Activated CD4-positive, alpha-beta memory T cell treated with anti-CD3 and anti-CD28 coated beads for 36 hours (primary cell): ENCODE measurements at regions of chr10 and their contacts with region 1.

Region 1: GRCh38 chr10:122495406-122496340 is 34.3 kb downstream of the HTRA1 start:
- DNase-seq: peak; percentile 26
- H3K4me3 Mint-ChIP-seq: no peak overlapping the region
- H3K27ac Mint-ChIP-seq: no peak overlapping the region
- H3K4me1 Mint-ChIP-seq: peaks cover 34% of the 10 kb centered on the region
- H3K27me3 Mint-ChIP-seq: peaks cover under 1% of the 10 kb centered on the region

Region 2: DNA sequence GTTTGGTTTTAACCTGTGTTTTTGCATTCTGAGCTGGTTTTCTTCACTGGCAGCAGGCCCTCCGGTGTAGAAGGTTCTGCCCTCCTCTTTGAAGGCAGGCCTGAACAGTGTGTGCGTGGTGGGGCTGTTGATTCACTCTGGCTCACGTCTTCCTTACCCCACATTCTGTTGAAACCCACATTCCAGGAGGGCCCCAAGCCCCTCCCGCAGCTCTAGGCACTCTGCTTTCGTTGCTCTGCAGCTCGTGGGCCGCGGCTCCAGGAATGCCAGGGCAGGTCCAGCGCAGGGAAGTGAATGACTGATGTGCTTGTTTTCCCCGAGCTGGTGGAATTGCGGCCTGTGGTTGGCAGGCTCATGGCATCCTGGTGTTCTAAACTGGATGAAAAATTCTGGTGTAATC is 14.7 kb after region 1 on chr10:
- CTCF ChIA-PET with region 1: interaction called, 4 read pairs
- POLR2A ChIA-PET with region 1: interaction called, 4 read pairs
- intact Hi-C with region 1: loop called (anchors 2 kb)
- DNase-seq: no peak
- H3K4me3 Mint-ChIP-seq: no peak overlapping the region
- H3K27ac Mint-ChIP-seq: no peak overlapping the region
- H3K4me1 Mint-ChIP-seq: peaks cover 16% of the 10 kb centered on the region
- H3K27me3 Mint-ChIP-seq: no peaks in the 10 kb centered on the region

Region 3: GRCh38 chr10:122515588-122516231 is 20.0 kb after region 1 on chr10:
- CTCF ChIA-PET with region 1: no interaction called
- POLR2A ChIA-PET with region 1: interaction called, 4 read pairs
- intact Hi-C with region 1: loop called (anchors 2 kb)
- DNase-seq: peak; percentile 80
- H3K4me3 Mint-ChIP-seq: no peak overlapping the region
- H3K27ac Mint-ChIP-seq: no peak overlapping the region
- H3K4me1 Mint-ChIP-seq: peaks cover 34% of the 10 kb centered on the region
- H3K27me3 Mint-ChIP-seq: peaks cover 3% of the 10 kb centered on the region

Region 4: DNA sequence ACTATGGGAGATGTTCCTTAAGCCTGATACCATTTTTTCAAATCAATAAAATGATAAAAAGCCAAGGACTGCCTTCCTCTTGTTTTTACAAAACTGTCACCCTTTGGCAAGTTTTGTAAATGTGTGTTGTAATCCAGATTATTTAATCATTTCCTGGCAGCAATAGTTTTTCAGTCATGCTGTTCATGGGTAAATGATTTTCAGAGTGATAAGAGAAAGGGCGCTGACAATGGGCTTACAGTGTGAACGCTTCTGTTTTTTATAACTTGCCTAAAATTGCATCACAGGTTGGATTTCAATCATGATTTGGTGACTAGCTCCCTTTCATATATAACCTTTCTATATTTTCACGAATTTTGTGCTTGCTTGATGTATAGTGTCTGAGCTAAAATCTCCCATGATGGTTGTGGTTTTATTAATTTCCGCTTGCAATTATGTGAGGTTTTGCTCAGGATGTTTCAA is 45.9 kb after region 1 on chr10:
- CTCF ChIA-PET with region 1: interaction called, 3 read pairs
- POLR2A ChIA-PET with region 1: no interaction called
- intact Hi-C with region 1: loop called (anchors 5 kb)
- DNase-seq: no peak
- H3K4me3 Mint-ChIP-seq: no peak overlapping the region
- H3K27ac Mint-ChIP-seq: no peak overlapping the region
- H3K4me1 Mint-ChIP-seq: peaks cover 47% of the 10 kb centered on the region
- H3K27me3 Mint-ChIP-seq: no peaks in the 10 kb centered on the region

Region 5: GRCh38 chr10:122688293-122688994 is 192.8 kb after region 1 on chr10:
- CTCF ChIA-PET with region 1: no interaction called
- POLR2A ChIA-PET with region 1: no interaction called
- intact Hi-C with region 1: no loop called
- DNase-seq: no peak
- H3K4me3 Mint-ChIP-seq: no peak overlapping the region
- H3K27ac Mint-ChIP-seq: no peak overlapping the region
- H3K4me1 Mint-ChIP-seq: no peaks in the 10 kb centered on the region
- H3K27me3 Mint-ChIP-seq: peaks cover 24% of the 10 kb centered on the region

Region 6: DNA sequence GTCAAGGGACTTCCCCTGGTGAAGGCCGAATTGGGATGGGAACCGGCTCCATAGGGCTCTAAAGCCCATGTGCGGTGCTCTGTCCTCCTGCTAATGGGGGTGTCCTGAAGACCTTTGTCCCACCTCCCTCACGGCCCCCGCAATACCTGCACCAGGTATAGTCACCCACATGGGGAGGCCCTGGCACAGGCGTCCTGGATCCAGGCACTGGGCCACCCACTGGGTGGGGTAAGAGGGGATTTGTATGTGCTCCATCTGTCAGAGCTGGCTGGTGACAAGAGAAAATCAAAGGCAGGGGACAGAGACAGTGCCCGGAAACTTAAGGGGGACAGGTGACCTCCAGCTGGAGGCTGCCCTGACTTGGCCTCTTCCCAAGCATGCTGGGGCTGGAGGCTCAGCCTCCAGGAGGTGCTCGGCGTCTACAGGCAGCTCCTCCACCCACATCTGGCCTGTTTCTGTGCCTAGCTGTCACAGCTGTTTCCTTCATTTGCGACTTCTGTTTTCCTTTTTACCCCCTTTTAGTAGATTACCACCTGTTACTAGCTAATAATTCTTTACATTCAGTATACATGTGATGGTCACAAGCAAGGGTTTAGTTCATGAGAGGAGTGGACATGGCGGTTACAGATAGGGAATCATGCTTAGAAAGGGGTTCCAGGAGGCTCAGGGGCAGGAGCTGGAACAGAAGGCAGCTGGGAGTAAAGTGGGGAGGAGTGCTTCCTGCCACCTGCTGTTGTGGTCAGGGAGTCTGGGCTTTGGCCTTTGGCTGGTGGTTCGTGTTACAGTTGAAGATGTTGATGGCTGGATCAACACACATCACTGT is 352.3 kb after region 1 on chr10:
- CTCF ChIA-PET with region 1: no interaction called
- POLR2A ChIA-PET with region 1: no interaction called
- intact Hi-C with region 1: no loop called
- DNase-seq: no peak
- H3K4me3 Mint-ChIP-seq: no peak overlapping the region
- H3K27ac Mint-ChIP-seq: peak overlapping the region; percentile 25
- H3K4me1 Mint-ChIP-seq: peaks cover 13% of the 10 kb centered on the region
- H3K27me3 Mint-ChIP-seq: no peaks in the 10 kb centered on the region